Calu3 (cell line): ENCODE measurements at regions of chr10 and their contacts with region 1.

Region 1: DNA sequence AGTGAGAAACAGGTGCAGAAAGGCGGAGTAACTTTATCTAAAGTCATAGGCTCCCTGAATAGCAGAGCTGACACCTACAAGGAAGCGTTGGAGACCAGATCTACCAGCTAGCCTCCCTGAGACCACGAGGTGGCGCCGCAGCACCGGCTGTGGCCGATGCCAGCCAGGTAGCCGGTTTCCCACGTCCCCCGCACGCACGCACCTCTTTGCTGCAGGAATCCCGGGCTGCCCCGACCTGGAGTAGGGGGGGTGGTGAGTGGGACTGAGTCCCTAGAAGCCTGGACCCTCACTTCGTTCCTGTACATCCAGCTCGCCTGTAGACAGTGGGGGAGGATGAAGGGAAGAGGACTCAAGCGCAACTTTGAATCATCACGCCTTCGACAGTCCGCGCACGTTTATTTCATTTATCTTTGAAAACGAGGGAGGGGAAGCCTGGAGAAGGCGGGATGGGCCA is 3.7 kb downstream of the ELOVL3 start:
- DNase-seq: peak; percentile 86
- H3K4me3 Mint-ChIP-seq: peak overlapping the region; percentile 70
- H3K27ac Mint-ChIP-seq: no peak overlapping the region
- H3K4me1 Mint-ChIP-seq: peaks cover 6% of the 10 kb centered on the region
- H3K27me3 Mint-ChIP-seq: peaks cover 37% of the 10 kb centered on the region
- CTCF ChIP-seq: peak; percentile 79

Region 2: GRCh38 chr10:102175415-102175814 is 54.4 kb before region 1 on chr10:
- CTCF ChIA-PET with region 1: no interaction called
- intact Hi-C with region 1: no loop called
- DNase-seq: no peak
- H3K4me3 Mint-ChIP-seq: no peak overlapping the region
- H3K27ac Mint-ChIP-seq: no peak overlapping the region
- H3K4me1 Mint-ChIP-seq: no peaks in the 10 kb centered on the region
- H3K27me3 Mint-ChIP-seq: no peaks in the 10 kb centered on the region
- CTCF ChIP-seq: no peak

Region 3: GRCh38 chr10:102185811-102186527 is 43.9 kb before region 1 on chr10:
- CTCF ChIA-PET with region 1: no interaction called
- intact Hi-C with region 1: no loop called
- DNase-seq: no peak
- H3K4me3 Mint-ChIP-seq: no peak overlapping the region
- H3K27ac Mint-ChIP-seq: no peak overlapping the region
- H3K4me1 Mint-ChIP-seq: no peaks in the 10 kb centered on the region
- H3K27me3 Mint-ChIP-seq: peaks cover 15% of the 10 kb centered on the region
- CTCF ChIP-seq: no peak

Region 4: DNA sequence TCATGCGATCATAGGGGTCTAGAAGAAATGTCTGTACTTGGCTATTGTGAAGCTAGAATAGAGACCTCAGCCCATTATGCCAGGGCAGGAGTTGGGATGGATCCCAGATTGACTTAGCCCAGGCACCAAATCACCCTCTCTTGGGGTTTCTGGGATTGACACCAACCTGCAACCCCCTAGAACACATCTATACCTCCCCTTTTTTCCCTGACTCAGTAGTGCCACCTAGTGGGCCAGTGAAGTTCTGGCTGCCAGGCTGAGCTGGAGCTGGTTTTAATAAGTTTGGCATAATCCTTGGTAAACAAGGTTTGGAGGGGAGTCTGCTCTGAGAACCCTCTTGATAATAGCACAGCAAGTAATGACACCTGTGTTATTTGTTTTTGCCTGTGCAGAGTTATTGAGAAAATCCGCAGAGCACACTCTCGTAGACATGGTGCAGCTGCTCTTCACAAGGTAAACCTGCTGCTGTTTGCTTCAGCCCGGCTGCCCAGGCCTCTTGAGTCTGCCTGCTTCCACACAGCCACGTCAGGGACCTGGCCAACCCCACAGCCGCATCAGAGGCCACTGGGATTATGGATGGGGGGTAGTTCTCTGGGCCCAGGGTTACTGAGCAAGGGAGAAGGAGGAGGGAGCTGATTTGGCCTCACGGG is 122.4 kb after region 1 on chr10:
- CTCF ChIA-PET with region 1: interaction called, 71 read pairs
- intact Hi-C with region 1: loop called (anchors 1 kb)
- DNase-seq: peak; percentile 61
- H3K4me3 Mint-ChIP-seq: no peak overlapping the region
- H3K27ac Mint-ChIP-seq: no peak overlapping the region
- H3K4me1 Mint-ChIP-seq: peaks cover 6% of the 10 kb centered on the region
- H3K27me3 Mint-ChIP-seq: no peaks in the 10 kb centered on the region
- CTCF ChIP-seq: peak; percentile 78

Region 5: DNA sequence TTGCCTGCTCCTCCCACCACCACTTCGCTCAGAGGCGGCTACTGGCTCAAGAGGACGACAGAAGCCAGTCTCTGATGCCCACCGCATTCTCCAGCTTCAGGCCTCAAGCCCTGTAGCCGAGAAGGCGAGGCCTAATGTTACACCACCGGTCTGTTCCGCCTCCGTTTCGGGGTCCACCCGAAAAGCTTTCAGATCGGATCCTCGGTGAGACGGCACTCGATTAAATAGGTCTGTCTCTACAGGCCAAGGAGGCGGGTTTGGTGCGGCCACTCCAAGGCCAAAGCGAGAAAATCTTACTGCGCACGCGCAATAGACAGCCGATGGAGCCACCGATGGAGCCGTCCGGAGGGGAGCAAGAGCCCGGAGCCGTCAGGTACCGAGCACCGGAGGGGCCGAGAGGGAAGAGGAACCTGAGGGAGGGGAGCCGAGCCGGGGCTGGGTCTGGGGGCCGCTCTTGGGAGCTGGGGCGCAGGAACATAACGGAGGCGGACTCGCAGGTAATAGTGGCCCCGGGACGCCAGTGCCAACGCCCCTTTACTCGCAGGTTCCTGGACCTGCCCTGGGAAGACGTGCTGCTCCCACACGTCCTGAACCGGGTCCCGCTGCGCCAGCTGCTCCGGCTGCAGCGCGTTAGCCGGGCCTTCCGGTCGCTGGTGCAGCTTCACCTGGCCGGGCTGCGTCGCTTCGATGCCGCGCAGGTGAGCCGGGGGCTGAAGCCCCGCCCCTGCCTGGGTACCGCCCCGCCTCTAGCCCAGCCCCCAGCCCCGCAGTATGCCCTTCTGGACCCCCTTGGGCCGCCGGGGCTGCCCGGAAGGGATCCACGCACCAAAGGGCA is 191.2 kb after region 1 on chr10 and contains the start of gene FBXL15:
- CTCF ChIA-PET with region 1: interaction called, 10 read pairs
- intact Hi-C with region 1: no loop called
- DNase-seq: peak; percentile 88
- H3K4me3 Mint-ChIP-seq: peak within 1 kb of the TSS; percentile 92
- H3K27ac Mint-ChIP-seq: peak within 1 kb of the TSS; percentile 80
- H3K4me1 Mint-ChIP-seq: peaks cover 3% of the 10 kb centered on the region
- H3K27me3 Mint-ChIP-seq: peaks cover 29% of the 10 kb centered on the region
- CTCF ChIP-seq: no peak
- total RNA-seq, gene FBXL15: 5.5 and 6.4 TPM in 2 replicates

Region 6: GRCh38 chr10:102479651-102480050 is 249.8 kb after region 1 on chr10:
- CTCF ChIA-PET with region 1: interaction called, 3 read pairs
- intact Hi-C with region 1: loop called (anchors 2 kb)
- DNase-seq: no peak
- H3K4me3 Mint-ChIP-seq: no peak overlapping the region
- H3K27ac Mint-ChIP-seq: no peak overlapping the region
- H3K4me1 Mint-ChIP-seq: no peaks in the 10 kb centered on the region
- H3K27me3 Mint-ChIP-seq: no peaks in the 10 kb centered on the region
- CTCF ChIP-seq: no peak

Region 7: GRCh38 chr10:102583435-102584417 is 353.9 kb after region 1 on chr10:
- CTCF ChIA-PET with region 1: interaction called, 11 read pairs
- intact Hi-C with region 1: no loop called
- DNase-seq: peak; percentile 75
- H3K4me3 Mint-ChIP-seq: no peak overlapping the region
- H3K27ac Mint-ChIP-seq: no peak overlapping the region
- H3K4me1 Mint-ChIP-seq: no peaks in the 10 kb centered on the region
- H3K27me3 Mint-ChIP-seq: no peaks in the 10 kb centered on the region
- CTCF ChIP-seq: peak; percentile 46